Mammary epithelial cell (primary cell): ENCODE measurements at regions of chr16 and their contacts with region 1.

Region 1: GRCh38 chr16:67040906-67041305 is 12.0 kb downstream of the CBFB start:
- DNase-seq: no peak
- H3K4me3 ChIP-seq: no peak overlapping the region
- H3K27ac ChIP-seq: no peak overlapping the region
- H3K4me1 ChIP-seq: no peaks in the 10 kb centered on the region
- H3K27me3 ChIP-seq: no peaks in the 10 kb centered on the region
- CTCF ChIP-seq: no peak

Region 2: DNA sequence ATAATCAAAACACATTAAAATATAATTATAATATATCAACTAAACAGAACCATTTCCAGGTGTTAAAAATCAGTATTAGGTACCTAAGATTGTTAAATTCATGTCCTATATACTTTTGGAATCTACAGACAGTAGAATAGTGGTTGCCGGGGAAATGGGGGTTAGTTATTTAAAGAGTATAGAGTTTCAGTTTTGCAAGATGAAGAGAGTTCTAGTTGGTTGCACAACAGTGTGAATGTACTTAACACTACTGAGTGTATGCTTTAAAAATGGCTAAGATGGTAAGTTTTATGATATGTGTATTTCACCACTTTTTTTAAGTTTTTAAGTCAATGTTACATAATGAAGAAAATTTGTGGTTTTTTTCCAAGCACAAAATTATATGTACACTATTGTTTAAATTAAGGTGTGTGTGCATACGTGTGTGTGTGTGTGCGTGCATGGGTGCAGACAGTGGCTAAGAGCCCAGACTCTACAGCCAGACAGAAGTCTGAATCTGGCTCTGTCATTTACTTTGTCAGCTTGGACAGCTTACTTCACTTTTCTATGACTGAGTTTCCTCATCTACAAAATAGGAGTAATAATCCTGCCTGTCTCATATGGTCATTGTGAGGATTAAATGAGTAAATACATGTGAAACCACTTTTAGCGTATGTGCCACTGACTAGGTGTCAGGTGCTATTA is 43.6 kb after region 1 on chr16:
- CTCF ChIA-PET with region 1: no interaction called
- dilution Hi-C with region 1: loop called (anchors 5 kb)
- in situ Hi-C with region 1: no loop called
- intact Hi-C with region 1: no loop called
- DNase-seq: no peak
- H3K4me3 ChIP-seq: no peak overlapping the region
- H3K27ac ChIP-seq: no peak overlapping the region
- H3K4me1 ChIP-seq: no peaks in the 10 kb centered on the region
- H3K27me3 ChIP-seq: no peaks in the 10 kb centered on the region
- CTCF ChIP-seq: no peak

Region 3: GRCh38 chr16:67146523-67147357 is 105.8 kb after region 1 on chr16:
- CTCF ChIA-PET with region 1: no interaction called
- dilution Hi-C with region 1: loop called (anchors 5 kb)
- in situ Hi-C with region 1: no loop called
- intact Hi-C with region 1: no loop called
- DNase-seq: no peak
- H3K4me3 ChIP-seq: no peak overlapping the region
- H3K27ac ChIP-seq: no peak overlapping the region
- H3K4me1 ChIP-seq: peaks cover 30% of the 10 kb centered on the region
- H3K27me3 ChIP-seq: no peaks in the 10 kb centered on the region
- CTCF ChIP-seq: no peak